ENCODE measurements at regions of chr5 and their contacts with region 1.

Region 1: GRCh38 chr5:116068028-116068632 is 16.7 kb upstream of the COMMD10 start:
- DNase-seq: no peak
- H3K4me3 ChIP-seq: no peak overlapping the region
- H3K27ac ChIP-seq: no peak overlapping the region
- H3K4me1 ChIP-seq: peaks cover 0 to 5% (median 2%) of the 10 kb centered on the region in 6 donors
- H3K27me3 ChIP-seq: peaks cover 0 to 5% (median 0%) of the 10 kb centered on the region in 7 donors
- CTCF ChIP-seq: peak; percentile 39 to 85 (median 76)
- POLR2A ChIP-seq: no peak

Region 2: DNA sequence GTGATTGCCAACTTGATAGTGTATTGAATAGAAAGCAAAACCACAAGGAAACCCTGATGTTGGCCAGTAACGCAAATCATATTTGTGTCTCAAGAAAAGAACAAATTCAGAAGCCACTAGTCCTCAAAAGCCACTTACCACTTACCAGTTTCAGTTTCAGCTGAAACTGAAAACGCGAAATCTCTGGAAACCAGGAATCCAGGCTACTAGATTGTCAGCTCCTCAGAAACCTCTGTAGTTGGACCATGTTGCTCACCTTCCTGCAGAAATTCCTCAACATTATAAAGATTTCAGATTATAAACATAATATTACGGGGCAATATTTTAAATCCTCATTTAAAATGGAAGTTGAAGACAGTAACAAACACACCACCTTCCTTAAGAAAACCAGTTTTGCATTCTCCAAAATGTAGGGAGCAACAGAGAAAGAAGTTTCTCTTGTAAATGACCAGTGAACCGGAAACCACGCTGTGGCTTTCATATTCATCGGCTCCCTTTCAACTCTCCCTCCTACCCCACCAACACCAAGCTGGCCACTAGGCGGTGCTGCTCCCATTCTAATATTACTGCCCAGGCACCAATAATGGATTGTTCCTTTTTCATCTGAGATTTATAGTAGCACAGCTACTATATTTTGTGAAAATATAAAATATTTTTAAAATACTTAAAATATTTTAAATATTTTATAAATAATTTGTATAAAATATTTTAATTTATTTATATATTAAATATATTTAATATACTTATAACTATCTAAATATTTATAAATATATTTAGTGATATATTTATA is 433.6 kb before region 1 on chr5:
- intact Hi-C with region 1: loop called (anchors 2 kb)
- DNase-seq: peak; percentile 94
- H3K4me3 ChIP-seq: peak overlapping the region in 7 of 8 donors; percentile 17 to 57 (median 33)
- H3K27ac ChIP-seq: peak overlapping the region in 7 of 8 donors; percentile 57 to 83 (median 71)
- H3K4me1 ChIP-seq: peaks cover 0 to 15% (median 11%) of the 10 kb centered on the region in 6 donors
- H3K27me3 ChIP-seq: peaks cover 0 to 7% (median 0%) of the 10 kb centered on the region in 7 donors
- CTCF ChIP-seq: peak; percentile 81 to 96 (median 94)
- POLR2A ChIP-seq: no peak

Region 3: GRCh38 chr5:115841382-115842088 is 226.6 kb before region 1 on chr5 and contains the starts of genes AP3S1 and ATG12:
- intact Hi-C with region 1: loop called (anchors 10 kb)
- DNase-seq: peak; percentile 98
- H3K4me3 ChIP-seq: peak within 1 kb of the TSS; percentile 70 to 95 (median 86)
- H3K27ac ChIP-seq: peak within 1 kb of the TSS; percentile 92 to 97 (median 95)
- H3K4me1 ChIP-seq: peaks cover 38 to 82% (median 69%) of the 10 kb centered on the region in 6 donors
- H3K27me3 ChIP-seq: no peaks in the 10 kb centered on the region
- CTCF ChIP-seq: peak in 4 of 11 experiments; percentile 10 to 15 (median 13)
- POLR2A ChIP-seq: peak; percentile 32 to 92 (median 70)
- total RNA-seq, gene AP3S1: 56.4 to 190 (median 63.3) TPM
- total RNA-seq, gene ATG12: 40.1 to 90.4 (median 53.7) TPM